Left ventricle myocardium inferior (tissue), 1 donor: ENCODE measurements at regions of chr1 and their contacts with region 1.

Region 1: DNA sequence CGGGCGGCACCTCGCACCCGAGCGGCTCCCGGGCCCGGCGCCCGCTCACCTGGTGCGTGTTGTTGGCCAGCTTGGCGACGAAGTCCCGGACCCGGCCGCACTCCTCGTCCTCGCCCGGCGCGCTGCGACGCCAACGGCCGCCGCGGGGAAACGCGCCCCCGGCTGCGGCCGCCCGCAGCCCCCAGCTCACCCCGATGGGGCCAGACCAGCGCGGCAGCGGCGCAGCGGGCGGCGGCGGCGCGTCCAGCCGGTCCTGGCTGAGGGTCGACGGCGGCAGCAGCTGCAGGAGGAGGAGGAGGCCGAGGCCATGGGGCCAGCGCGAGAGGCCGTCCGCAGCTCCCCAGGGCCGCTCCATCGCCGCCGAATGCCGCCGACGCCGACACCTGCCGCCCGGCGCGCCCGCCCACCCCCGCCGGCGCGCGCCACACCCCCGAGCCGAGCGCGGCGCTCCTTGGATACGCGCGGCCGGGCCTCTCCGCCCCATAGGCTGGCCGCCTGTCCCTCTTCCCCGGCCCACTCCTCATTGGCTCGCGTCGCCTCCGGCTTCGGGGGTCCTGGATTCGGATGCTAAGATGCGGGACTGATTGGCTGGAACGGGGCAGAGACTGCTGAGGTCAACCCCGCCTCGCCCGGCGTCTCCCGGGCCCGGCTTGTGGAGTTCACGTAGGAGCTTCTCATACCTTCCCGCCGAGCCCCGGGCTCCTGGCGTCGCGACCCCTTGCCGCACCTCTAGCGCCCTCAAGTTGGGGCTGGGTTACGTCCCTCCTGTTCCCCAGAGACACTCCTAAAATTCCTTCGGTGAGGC is at the start of gene SORT1:
- DNase-seq: peak; percentile 88
- H3K4me3 ChIP-seq: peak within 1 kb of the TSS; percentile 74
- H3K27ac ChIP-seq: peak within 1 kb of the TSS; percentile 92
- H3K4me1 ChIP-seq: peaks cover 65% of the 10 kb centered on the region
- H3K27me3 ChIP-seq: no peaks in the 10 kb centered on the region
- CTCF ChIP-seq: no peak
- total RNA-seq, gene SORT1: 146 TPM

Region 2: DNA sequence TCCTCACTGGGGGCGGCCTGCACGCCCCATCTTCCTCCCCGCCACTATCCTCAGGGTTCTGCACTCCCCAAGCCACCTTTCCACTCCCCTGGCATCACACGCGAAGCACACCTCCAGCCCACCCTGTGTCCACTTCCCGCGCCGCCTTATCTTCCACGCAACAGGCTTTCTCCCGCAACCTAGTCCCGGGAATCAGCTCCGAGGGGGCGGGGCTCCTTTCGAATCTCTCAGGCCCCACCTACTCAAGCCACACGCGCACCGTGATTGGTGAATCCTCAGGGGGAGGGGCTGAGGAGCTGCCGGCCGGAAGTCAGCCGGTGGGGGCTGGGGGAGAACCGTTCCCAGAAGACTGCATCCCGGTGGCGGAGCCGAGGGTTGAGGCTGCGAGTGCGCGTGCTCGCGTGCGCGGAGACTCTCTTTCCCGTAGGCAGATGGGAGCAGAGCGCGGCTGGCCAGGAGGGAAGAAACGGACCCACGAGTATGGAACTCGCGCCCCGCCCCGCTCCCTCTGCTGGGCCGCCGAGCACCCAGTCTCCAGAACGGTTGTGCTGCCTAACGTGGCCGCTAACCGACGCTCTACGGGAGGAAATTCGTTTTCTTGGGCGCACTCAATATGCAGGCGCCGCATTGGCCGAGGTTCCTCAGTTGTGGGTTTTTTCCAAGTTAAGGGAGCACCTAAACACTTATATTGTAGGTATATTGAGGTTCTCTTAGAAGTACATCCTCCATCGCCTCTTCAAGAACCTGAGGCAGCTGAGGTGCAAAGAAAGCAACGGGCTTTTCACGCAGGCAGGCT is 114.6 kb before region 1 on chr1 and contains the start of gene PSRC1:
- intact Hi-C with region 1: loop called (anchors 5 kb)
- DNase-seq: peak; percentile 95
- H3K4me3 ChIP-seq: peak within 1 kb of the TSS; percentile 75
- H3K27ac ChIP-seq: peak within 1 kb of the TSS; percentile 90
- H3K4me1 ChIP-seq: peaks cover 29% of the 10 kb centered on the region
- H3K27me3 ChIP-seq: no peaks in the 10 kb centered on the region
- CTCF ChIP-seq: peak; percentile 71
- total RNA-seq, gene PSRC1: 0.80 TPM